ENCODE measurements at regions of chr12 and their contacts with region 1.

Region 1: GRCh38 chr12:107402041-107403022 is 283.3 kb upstream of the PWP1 start:
- DNase-seq: peak; percentile 47 to 85
- ATAC-seq: peak; percentile 69 to 82; a peak in 5 of 6 replicates
- H3K4me3 ChIP-seq: no peak overlapping the region
- H3K27ac ChIP-seq: peak overlapping the region; percentile 61 to 82
- H3K4me1 ChIP-seq: peaks cover 61% of the 10 kb centered on the region
- CTCF ChIP-seq: peak; percentile 74
- EP300 ChIP-seq: no peak
- POLR2A ChIP-seq: no peak
- RAD21 ChIP-seq: peak; percentile 88 to 89

Region 2: DNA sequence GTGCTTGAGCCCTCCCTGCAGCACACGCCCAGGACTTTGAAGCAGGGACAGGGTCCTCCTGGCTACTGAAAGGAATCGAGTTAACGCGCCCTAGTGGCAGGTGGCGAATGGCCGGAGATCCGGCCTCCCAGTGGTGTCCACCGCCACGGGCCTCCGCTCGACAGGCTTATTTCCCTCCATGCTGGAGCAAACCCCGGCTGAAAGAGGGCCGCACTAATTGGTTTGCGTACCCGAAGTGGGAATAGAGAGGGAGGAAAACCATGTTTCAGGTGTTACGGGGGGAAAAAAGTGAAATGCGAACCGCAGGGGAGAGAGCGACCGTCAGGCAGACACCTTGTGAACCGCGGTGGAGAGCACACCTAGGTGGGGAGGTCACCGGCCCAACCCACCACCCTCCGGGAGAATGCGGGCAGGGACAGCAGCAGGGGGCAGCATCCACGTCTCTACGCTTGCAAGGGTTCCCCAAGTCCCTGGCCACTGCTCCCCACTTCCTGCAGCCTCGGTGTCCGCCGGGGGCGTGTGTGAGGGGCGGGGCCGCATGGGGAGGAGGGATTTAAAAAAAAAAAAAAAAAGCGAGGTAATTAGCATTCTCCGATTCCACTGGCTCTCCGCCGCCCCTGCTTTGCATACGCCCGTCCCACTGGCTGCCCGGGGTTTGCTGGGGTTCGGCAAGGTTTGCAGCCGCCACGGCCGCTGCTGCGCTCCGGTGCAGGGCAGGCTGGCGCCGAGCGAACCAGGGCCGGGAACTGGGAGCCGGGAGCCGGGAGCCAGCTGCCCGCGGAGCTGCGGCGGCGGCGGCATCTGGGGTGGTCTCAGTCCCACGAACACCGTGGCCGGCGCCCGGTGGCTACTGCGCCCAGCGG is 84.3 kb before region 1 on chr12:
- CTCF ChIA-PET with region 1: interaction called, 29 read pairs
- POLR2A ChIA-PET with region 1: interaction called, 3 read pairs
- DNase-seq: peak; percentile 91 to 95
- ATAC-seq: peak; percentile 75 to 90
- H3K4me3 ChIP-seq: peak overlapping the region; percentile 88
- H3K27ac ChIP-seq: peak overlapping the region; percentile 85 to 94
- H3K4me1 ChIP-seq: peaks cover 19% of the 10 kb centered on the region; the same call in 2 of the 3 replicates
- CTCF ChIP-seq: peak; percentile 60
- EP300 ChIP-seq: no peak
- POLR2A ChIP-seq: peak; percentile 86
- RAD21 ChIP-seq: peak; percentile 62 to 68

Region 3: DNA sequence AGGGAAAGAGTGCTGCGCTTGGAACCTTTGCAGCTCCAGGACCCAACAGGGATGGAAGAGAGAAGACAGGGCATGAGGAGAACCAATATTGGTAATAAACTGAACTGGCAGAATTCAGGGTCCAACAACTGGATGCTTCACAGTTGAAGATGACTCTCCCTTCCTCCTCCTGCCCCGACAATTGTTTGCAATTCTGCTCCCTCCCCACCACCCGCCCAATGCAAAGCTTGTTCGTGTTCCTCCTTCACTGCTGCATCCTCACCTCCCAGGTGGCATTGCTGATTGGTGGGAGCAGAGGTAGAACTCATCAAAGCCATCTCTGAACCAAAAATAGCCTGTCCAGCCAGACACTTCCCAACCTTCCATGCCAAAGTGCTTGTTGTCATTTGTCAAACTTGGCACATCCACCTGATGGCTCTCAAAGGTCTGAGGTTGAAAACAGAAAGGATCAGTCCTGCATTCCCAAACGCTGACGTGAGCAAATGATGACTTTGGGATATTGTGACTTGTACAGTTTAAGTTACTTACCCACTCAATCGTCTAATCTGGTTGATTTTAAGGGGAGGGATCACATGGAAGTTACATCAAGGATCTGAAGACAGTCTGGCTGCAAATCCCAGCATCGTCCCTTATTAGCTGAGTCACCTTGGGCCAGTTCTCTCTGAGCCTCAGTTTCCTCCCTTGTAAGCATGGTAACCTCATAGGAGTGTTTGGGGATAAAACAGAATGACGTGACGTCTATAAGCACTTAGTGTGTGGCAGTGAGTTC is 66.3 kb before region 1 on chr12:
- CTCF ChIA-PET with region 1: interaction called, 11 read pairs
- POLR2A ChIA-PET with region 1: no interaction called
- DNase-seq: peak; percentile 33 to 85
- ATAC-seq: peak; percentile 79 to 81
- H3K4me3 ChIP-seq: 0 out of 3 replicates have a peak overlapping the region, but pooled peaks have one; percentile 11
- H3K27ac ChIP-seq: peak overlapping the region; percentile 64 to 79
- H3K4me1 ChIP-seq: peaks cover 81% of the 10 kb centered on the region
- CTCF ChIP-seq: no peak
- EP300 ChIP-seq: no peak
- POLR2A ChIP-seq: no peak
- RAD21 ChIP-seq: peak in 1 of 2 experiments; percentile 6; a peak in 1 of 5 replicates

Region 4: DNA sequence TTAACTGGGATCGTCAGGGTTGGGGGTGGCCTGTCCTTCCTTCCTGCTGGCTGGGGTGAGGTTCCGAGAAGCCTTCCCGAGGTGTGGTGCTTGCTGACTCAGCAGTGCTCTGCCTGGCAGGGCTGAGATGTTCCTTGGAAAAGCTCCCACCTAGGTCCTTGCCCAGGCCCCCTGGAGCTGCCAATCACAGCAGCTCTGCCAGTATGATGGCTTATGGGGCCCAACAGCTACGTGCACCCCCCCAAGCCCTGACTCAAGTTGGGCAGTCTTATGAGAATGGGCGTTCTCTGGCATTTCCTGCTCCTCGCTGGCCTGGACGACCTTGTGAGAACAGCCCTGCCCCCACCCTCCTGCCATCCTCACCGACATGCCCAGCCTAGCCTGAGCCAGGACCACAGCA is 16.8 kb before region 1 on chr12:
- CTCF ChIA-PET with region 1: interaction called, 13 read pairs
- POLR2A ChIA-PET with region 1: no interaction called
- DNase-seq: peak in 1 of 2 experiments; percentile 74
- ATAC-seq: peak; percentile 52 to 56; a peak in 4 of 6 replicates
- H3K4me3 ChIP-seq: no peak overlapping the region
- H3K27ac ChIP-seq: peak overlapping the region; percentile 64 to 87
- H3K4me1 ChIP-seq: peaks cover 59% of the 10 kb centered on the region
- CTCF ChIP-seq: no peak
- EP300 ChIP-seq: no peak
- POLR2A ChIP-seq: no peak
- RAD21 ChIP-seq: no peak

Region 5: DNA sequence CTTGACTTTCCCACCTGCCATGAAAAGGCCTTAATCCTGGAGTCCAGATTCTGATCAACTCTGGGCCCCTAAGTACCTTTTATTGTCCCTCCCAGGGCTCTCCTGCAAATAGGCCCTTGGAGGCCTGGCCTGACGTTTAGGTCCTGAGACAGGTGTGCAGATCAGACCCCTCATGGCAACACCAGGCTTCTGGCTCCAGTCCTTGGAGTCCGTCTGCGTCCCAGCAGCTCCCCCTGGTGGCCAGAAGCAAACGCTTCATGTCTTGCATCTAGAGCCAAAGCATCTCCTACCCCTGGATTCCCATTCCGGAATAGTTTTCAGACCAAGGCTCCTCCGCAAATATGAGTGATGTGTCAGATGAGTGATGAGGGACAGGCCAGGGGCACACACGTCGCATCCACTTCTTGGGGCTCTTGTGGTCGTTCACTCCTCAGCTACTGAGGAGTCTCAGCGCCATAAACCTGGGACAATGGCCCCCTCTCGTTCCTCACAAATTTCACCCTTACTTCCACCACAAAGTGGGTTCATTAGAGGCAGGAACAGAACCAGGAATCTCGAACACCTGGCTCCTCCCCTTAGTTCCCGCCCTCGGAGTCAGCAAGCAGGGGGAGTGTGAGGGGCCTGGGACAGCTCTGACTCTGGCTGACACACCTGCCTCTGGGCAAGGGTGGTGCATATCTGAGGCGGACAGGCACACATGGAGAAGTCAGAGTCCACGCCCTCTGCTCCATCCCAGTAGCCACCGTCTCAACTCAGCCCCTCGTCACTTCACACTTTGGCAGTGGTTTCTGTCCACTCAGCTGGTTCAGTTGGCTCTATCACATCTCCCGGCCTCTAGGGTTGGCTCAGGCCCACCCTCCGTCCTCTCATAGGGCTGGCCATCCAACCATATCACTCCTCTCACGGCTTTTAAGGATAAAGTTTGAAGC is 205.4 kb after region 1 on chr12:
- CTCF ChIA-PET with region 1: interaction called, 146 read pairs
- POLR2A ChIA-PET with region 1: no interaction called
- DNase-seq: peak; percentile 83 to 86
- ATAC-seq: peak; percentile 78 to 95
- H3K4me3 ChIP-seq: no peak overlapping the region
- H3K27ac ChIP-seq: peak overlapping the region; percentile 6 to 18; a peak in 1 of 6 replicates
- H3K4me1 ChIP-seq: no peaks in the 10 kb centered on the region
- CTCF ChIP-seq: peak; percentile 90
- EP300 ChIP-seq: no peak
- POLR2A ChIP-seq: no peak
- RAD21 ChIP-seq: peak; percentile 95 to 96

Region 6: GRCh38 chr12:107645630-107646333 is 243.4 kb after region 1 on chr12:
- CTCF ChIA-PET with region 1: no interaction called
- POLR2A ChIA-PET with region 1: no interaction called
- DNase-seq: no peak
- ATAC-seq: no peak
- H3K4me3 ChIP-seq: no peak overlapping the region
- H3K27ac ChIP-seq: no peak overlapping the region
- H3K4me1 ChIP-seq: no peaks in the 10 kb centered on the region
- CTCF ChIP-seq: no peak
- EP300 ChIP-seq: no peak
- POLR2A ChIP-seq: no peak
- RAD21 ChIP-seq: no peak